ENCODE measurements at regions of chr16 and their contacts with region 1.

Region 1: DNA sequence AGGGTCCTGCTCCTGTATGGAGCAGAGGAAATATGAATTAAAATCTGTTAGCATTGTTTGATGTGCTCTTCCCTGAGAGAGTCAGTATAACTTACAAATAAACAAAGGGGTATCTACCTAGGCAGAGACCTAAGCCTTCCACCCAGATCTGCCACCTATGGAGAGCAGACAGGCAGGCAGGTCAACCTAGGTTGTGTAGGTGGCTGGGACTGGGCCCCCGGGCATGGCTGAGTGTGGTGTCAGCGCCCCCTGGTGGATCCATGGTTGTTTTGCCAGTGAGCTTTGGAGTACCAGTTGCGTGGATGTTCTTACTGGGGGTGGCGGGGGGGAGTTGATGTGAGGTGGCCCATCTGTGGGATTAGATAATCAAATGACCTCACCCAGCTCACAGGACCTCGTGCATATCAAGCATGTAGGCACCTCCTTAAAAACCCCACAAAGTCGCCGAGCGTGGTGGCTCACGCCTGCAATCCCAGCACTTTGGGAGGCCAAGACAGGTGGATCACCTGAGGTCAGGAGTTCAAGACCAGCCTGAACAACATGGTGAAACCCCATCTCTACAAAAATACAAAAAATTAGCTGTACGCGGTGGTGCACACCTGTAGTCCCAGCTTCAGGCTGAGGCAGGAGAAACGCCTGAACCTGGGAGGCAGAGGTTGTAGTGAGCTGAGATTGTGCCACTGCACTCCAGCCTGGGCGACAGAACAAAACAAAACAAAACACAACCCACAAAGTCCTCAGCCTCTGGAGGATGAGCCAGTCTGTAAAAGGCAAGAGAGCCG is 17.6 kb downstream of the DUS2 start:
- DNase-seq: peak; percentile 81 to 91 (median 85)
- H3K4me3 ChIP-seq: no peak overlapping the region
- H3K4me3 Mint-ChIP-seq: no peak overlapping the region
- H3K27ac ChIP-seq: no peak overlapping the region
- H3K27ac Mint-ChIP-seq: peak overlapping the region in 6 of 8 donors; percentile 51 to 92 (median 78)
- H3K4me1 ChIP-seq: peaks cover 8% of the 10 kb centered on the region
- H3K4me1 Mint-ChIP-seq: peaks cover 13 to 22% (median 16%) of the 10 kb centered on the region in 3 donors
- H3K27me3 ChIP-seq: no peaks in the 10 kb centered on the region
- H3K27me3 Mint-ChIP-seq: no peaks in the 10 kb centered on the region

Region 2: GRCh38 chr16:67883872-67884261 is 156.8 kb before region 1 on chr16:
- CTCF ChIA-PET with region 1: interaction called, 44 read pairs
- POLR2A ChIA-PET with region 1: interaction called, 3 read pairs
- DNase-seq: peak; percentile 66 to 80 (median 67)
- H3K4me3 ChIP-seq: no peak overlapping the region
- H3K4me3 Mint-ChIP-seq: no peak overlapping the region
- H3K27ac ChIP-seq: no peak overlapping the region
- H3K27ac Mint-ChIP-seq: peak overlapping the region in 3 of 8 donors; percentile 17 to 82 (median 24)
- H3K4me1 ChIP-seq: no peaks in the 10 kb centered on the region
- H3K4me1 Mint-ChIP-seq: no peaks in the 10 kb centered on the region
- H3K27me3 ChIP-seq: no peaks in the 10 kb centered on the region
- H3K27me3 Mint-ChIP-seq: no peaks in the 10 kb centered on the region

Region 3: GRCh38 chr16:67993189-67994039 is 47.3 kb before region 1 on chr16:
- CTCF ChIA-PET with region 1: interaction called, 39 read pairs
- POLR2A ChIA-PET with region 1: interaction called, 5 read pairs
- DNase-seq: peak; percentile 75 to 85 (median 81)
- H3K4me3 ChIP-seq: peak overlapping the region; percentile 41
- H3K4me3 Mint-ChIP-seq: peak overlapping the region; percentile 73 to 88 (median 82)
- H3K27ac ChIP-seq: peak overlapping the region; percentile 71
- H3K27ac Mint-ChIP-seq: peak overlapping the region; percentile 78 to 98 (median 95)
- H3K4me1 ChIP-seq: peaks cover 23% of the 10 kb centered on the region
- H3K4me1 Mint-ChIP-seq: peaks cover 22 to 48% (median 32%) of the 10 kb centered on the region in 3 donors
- H3K27me3 ChIP-seq: no peaks in the 10 kb centered on the region
- H3K27me3 Mint-ChIP-seq: no peaks in the 10 kb centered on the region

Region 4: GRCh38 chr16:68005786-68006286 is 34.9 kb before region 1 on chr16:
- CTCF ChIA-PET with region 1: interaction called, 19 read pairs
- POLR2A ChIA-PET with region 1: no interaction called
- DNase-seq: peak in 3 of 5 donors; percentile 57 to 72 (median 70)
- H3K4me3 ChIP-seq: no peak overlapping the region
- H3K4me3 Mint-ChIP-seq: peak overlapping the region in 6 of 7 donors; percentile 49 to 78 (median 73)
- H3K27ac ChIP-seq: peak overlapping the region; percentile 41
- H3K27ac Mint-ChIP-seq: peak overlapping the region; percentile 82 to 98 (median 93)
- H3K4me1 ChIP-seq: peaks cover 41% of the 10 kb centered on the region
- H3K4me1 Mint-ChIP-seq: peaks cover 35 to 42% (median 42%) of the 10 kb centered on the region in 3 donors
- H3K27me3 ChIP-seq: no peaks in the 10 kb centered on the region
- H3K27me3 Mint-ChIP-seq: no peaks in the 10 kb centered on the region

Region 5: DNA sequence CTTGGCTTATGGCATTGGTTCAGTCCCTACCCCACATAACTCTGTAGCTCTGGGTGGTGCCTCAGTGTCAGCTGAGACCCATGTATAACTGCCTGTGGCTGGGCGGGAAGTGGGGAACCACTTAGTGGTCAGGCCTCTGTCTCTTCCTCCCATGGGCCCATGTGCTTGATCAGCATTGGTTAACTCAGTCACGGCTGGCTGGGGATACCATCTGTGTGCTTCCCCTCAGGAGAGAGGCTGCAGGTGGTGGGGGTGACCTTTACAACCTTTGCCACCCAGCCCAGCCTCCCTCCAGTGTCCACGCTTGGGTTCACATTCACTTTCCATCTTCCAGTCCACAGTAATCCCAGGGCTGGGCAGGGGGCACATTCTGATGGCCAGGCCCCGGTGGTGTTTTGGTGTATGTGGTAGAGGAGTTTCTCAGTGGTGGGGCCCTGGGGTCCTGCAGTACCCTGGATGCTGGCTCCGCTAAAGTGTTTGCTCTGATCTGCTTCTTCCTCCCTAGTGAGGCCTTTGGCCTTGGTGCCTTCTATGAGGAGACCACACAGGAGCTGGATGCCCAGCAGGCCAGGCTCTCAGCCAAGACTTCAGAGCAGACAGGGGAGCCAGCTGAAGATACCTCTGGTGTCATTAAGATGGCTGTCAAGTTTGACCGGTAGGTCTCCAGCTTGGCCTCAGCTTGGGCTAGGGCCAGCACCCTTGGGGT is 34.3 kb after region 1 on chr16:
- CTCF ChIA-PET with region 1: interaction called, 16 read pairs
- POLR2A ChIA-PET with region 1: interaction called, 3 read pairs
- DNase-seq: peak; percentile 53 to 87 (median 69)
- H3K4me3 ChIP-seq: peak overlapping the region; percentile 40
- H3K4me3 Mint-ChIP-seq: peak overlapping the region; percentile 51 to 91 (median 82)
- H3K27ac ChIP-seq: no peak overlapping the region
- H3K27ac Mint-ChIP-seq: peak overlapping the region; percentile 81 to 99 (median 94)
- H3K4me1 ChIP-seq: peaks cover 85% of the 10 kb centered on the region
- H3K4me1 Mint-ChIP-seq: peaks cover 88 to 90% (median 90%) of the 10 kb centered on the region in 3 donors
- H3K27me3 ChIP-seq: no peaks in the 10 kb centered on the region
- H3K27me3 Mint-ChIP-seq: no peaks in the 10 kb centered on the region

Region 6: DNA sequence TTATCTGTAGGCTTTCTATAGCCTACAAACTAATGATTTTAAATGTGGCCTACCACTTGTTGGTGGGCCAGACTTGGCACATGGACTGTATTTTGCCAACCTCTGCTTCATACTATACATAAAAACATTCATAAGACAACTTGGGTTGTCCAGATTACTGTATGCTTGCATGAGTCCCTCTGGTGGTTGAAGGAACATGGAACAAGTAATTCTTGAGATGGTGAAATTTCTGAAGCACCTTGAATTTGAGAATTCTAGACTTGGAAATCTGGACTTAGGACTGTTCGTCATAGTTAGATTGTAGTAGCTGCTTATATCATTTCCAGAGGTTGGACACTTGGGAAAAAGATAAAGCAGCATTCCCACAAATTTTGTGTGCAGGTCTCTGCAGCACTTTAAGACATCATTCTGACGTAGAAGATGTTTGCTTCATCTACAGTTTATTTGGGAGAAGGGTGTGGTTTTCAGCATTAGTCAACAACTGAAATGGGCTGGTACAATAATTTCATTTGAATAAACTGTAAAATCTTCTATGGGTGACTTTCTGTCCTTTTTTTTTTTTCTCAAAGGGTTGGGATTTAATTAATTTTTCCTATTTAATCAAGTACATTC is 75.7 kb after region 1 on chr16:
- CTCF ChIA-PET with region 1: no interaction called
- POLR2A ChIA-PET with region 1: no interaction called
- DNase-seq: peak in 2 of 5 donors; percentile 16 to 19
- H3K4me3 ChIP-seq: no peak overlapping the region
- H3K4me3 Mint-ChIP-seq: peak overlapping the region in 5 of 7 donors; percentile 11 to 47 (median 19)
- H3K27ac ChIP-seq: no peak overlapping the region
- H3K27ac Mint-ChIP-seq: peak overlapping the region in 5 of 8 donors; percentile 10 to 68 (median 55)
- H3K4me1 ChIP-seq: peaks cover 90% of the 10 kb centered on the region
- H3K4me1 Mint-ChIP-seq: peaks cover 83 to 96% (median 92%) of the 10 kb centered on the region in 3 donors
- H3K27me3 ChIP-seq: no peaks in the 10 kb centered on the region
- H3K27me3 Mint-ChIP-seq: no peaks in the 10 kb centered on the region